HepG2 (cell line): ENCODE measurements at regions of chr7 and their contacts with region 1.

Region 1: DNA sequence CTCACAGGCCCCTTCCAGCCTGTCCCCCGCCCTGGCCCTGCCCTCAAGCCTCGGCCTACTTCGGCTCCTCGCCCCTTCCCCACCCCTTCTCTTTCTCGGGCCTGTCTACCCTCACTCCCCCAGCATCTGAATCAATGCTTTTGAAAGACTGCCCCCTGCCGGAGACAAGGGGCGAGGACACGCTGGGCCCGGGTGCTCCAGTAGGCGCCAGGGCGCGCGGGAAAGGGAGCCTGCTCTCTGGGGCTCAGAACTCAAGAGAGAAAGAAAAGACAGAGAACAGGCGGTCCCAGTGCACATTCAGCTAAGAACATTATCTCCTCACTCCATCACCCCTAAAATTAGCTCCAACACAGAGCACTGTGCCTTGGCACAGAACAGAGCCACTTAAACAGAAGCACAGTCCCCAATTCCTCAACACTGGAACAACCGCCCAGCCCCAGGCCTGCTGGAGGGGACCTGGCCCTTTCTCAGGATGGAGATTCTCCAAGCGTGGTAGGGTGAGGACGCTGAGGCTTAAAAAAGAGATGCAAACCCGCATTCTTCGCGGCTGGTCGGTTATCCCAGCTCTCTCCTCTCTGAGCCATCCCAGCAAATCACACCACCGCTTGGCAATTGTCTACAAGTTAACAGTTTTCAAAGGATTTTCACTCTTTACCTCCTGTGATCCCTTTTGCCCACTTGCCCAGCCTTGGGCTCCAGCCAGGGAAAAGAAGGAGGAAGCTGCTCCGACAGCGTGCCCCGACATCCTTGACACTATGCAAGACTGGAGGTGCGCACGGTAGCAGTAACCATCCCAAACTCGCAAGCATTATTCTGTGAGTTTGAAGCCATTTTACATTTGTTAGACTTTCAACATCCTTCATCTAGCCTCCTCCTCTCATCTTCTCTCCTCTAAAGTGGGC is 2.1 kb downstream of the GIGYF1 start:
- DNase-seq: peak; percentile 72
- ATAC-seq: peak; percentile 88
- H3K4me3 ChIP-seq: peak overlapping the region; percentile 93 to 97 (median 96); a peak in 5 of 6 replicates
- H3K27ac ChIP-seq: peak overlapping the region; percentile 34
- H3K4me1 ChIP-seq: peaks cover 34% of the 10 kb centered on the region
- H3K27me3 ChIP-seq: no peaks in the 10 kb centered on the region
- CTCF ChIP-seq: peak; percentile 95
- EP300 ChIP-seq: no peak
- POLR2A ChIP-seq: no peak
- RAD21 ChIP-seq: peak; percentile 73

Region 2: DNA sequence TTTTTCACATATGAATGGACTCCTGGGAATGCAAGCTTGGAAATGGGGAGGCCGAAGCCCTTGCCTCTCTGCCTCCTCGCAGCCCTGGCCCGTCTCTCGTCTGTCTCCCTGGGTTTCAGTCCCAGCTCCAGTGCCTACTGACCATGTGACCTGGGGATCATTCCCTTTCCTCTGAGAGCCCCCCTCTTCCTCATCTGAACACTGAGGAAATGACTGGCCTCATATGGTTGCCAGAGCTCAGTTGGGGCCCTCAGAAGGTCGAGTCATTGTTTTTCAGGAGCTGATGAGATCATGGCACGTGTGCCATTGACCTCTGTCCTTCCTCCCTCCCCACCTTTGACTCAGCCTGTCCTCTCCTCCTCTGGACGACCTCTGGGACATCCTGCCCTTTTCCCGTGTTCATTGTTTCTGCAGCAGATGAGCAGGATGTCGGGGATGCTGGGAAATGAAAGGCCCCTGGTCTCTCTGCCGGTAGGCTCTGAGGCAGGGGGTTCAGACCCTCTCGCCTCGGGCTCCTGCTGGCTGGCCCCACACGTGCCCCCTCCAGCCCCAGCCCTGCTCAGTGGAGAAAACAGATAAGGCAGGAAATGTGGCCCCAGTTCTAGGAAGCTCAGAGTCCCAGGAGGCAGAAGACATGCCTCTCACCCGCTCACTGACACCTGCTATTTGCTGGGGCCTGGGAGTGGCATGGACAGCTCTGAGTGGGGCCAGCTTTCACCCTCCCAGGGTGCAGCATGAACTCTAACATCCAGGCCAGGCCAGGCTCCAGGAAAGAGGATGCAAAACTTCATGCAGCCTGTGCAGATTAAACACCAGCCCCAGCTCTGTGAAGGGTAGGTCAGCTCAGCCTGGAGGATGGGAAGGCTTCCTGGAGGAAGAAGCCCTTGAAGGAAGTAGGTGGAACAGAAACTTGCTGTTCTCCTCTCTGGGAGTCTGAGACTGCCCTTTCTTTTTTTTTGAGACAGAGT is 247.3 kb before region 1 on chr7:
- CTCF ChIA-PET with region 1: no interaction called
- POLR2A ChIA-PET with region 1: no interaction called
- in situ Hi-C with region 1: no loop called
- intact Hi-C with region 1: no loop called
- DNase-seq: peak; percentile 96
- ATAC-seq: peak; percentile 85
- H3K4me3 ChIP-seq: peak overlapping the region in 2 of 3 experiments; percentile 27 to 51; a peak in 4 of 6 replicates
- H3K27ac ChIP-seq: peak overlapping the region; percentile 94
- H3K4me1 ChIP-seq: peaks cover 53% of the 10 kb centered on the region
- H3K27me3 ChIP-seq: no peaks in the 10 kb centered on the region
- CTCF ChIP-seq: no peak
- EP300 ChIP-seq: peak in 1 of 2 experiments; percentile 82; a peak in 3 of 4 replicates
- POLR2A ChIP-seq: peak; percentile 53 to 63; a peak in 2 of 4 replicates
- RAD21 ChIP-seq: no peak

Region 3: DNA sequence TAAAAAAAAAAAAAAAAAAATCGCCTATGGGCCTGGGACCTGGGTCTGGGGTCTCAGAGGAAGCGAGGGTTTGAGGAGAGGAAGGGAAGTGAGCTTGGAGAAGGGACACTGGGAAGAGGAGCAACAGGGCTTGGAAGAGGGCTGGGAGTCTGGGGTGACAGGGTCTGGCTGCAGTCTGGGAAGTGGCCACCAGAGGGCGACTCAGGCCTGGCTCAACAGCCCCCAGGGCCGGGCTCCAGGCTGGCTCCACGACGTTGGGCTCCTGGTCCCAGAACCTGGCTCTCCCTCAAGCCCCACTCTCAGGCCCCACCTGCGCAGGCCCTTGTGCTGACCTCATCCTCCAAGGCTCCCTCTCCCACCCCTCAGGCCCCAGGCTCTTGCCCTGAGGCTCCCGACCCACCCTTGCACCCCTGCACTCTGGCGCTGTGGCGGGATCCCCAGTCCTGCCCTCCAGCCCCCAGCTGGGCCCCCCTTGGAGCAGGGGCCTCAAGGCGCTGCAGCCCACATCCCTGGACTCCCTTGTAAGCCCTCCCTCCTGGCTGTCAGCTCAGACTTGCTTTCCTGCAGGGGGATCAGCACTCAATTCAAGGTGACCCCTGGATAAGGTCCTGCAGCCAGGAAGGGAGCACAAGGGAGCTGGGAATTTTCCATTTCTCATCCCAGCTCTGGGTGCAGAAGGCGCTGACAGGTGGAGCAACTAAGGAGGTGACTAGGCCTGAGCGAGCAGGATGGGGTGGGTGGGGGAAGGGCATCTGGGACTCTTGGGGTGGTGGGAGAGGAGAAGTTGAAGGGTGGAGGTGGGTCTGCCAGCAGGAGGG is 222.5 kb before region 1 on chr7:
- CTCF ChIA-PET with region 1: no interaction called
- POLR2A ChIA-PET with region 1: no interaction called
- in situ Hi-C with region 1: loop called (anchors 10 kb)
- intact Hi-C with region 1: no loop called
- DNase-seq: peak; percentile 51
- ATAC-seq: peak; percentile 87
- H3K4me3 ChIP-seq: 0 out of 6 replicates have a peak overlapping the region, but pooled peaks of 1 of the 3 experiments have one; percentile 28
- H3K27ac ChIP-seq: no peak overlapping the region
- H3K4me1 ChIP-seq: peaks cover 17% of the 10 kb centered on the region
- H3K27me3 ChIP-seq: no peaks in the 10 kb centered on the region
- CTCF ChIP-seq: peak; percentile 95
- EP300 ChIP-seq: no peak
- POLR2A ChIP-seq: no peak
- RAD21 ChIP-seq: peak; percentile 97

Region 4: GRCh38 chr7:100611974-100612729 is 79.8 kb before region 1 on chr7 and contains the start of gene MOSPD3:
- CTCF ChIA-PET with region 1: no interaction called
- POLR2A ChIA-PET with region 1: interaction called, 6 read pairs
- in situ Hi-C with region 1: loop called (anchors 5 kb)
- intact Hi-C with region 1: loop called (anchors 5 kb)
- DNase-seq: peak; percentile 99
- ATAC-seq: peak; percentile 94
- H3K4me3 ChIP-seq: peak within 1 kb of the TSS; percentile 61 to 81 (median 77)
- H3K27ac ChIP-seq: peak within 1 kb of the TSS; percentile 95
- H3K4me1 ChIP-seq: peaks cover 29% of the 10 kb centered on the region
- H3K27me3 ChIP-seq: no peaks in the 10 kb centered on the region
- CTCF ChIP-seq: no peak
- EP300 ChIP-seq: no peak
- POLR2A ChIP-seq: peak; percentile 60 to 78
- RAD21 ChIP-seq: no peak
- total RNA-seq, gene MOSPD3: 6.1 and 7.6 TPM in 2 replicates

Region 5: GRCh38 chr7:100629117-100629756 is 62.7 kb before region 1 on chr7:
- CTCF ChIA-PET with region 1: interaction called, 8 read pairs
- POLR2A ChIA-PET with region 1: interaction called, 5 read pairs
- in situ Hi-C with region 1: no loop called
- intact Hi-C with region 1: loop called (anchors 1 kb)
- DNase-seq: no peak
- ATAC-seq: peak; percentile 77
- H3K4me3 ChIP-seq: no peak overlapping the region
- H3K27ac ChIP-seq: no peak overlapping the region
- H3K4me1 ChIP-seq: no peaks in the 10 kb centered on the region
- H3K27me3 ChIP-seq: no peaks in the 10 kb centered on the region
- CTCF ChIP-seq: peak; percentile 66
- EP300 ChIP-seq: no peak
- POLR2A ChIP-seq: no peak
- RAD21 ChIP-seq: peak; percentile 61; the same call in 1 of the 2 replicates

Region 6: DNA sequence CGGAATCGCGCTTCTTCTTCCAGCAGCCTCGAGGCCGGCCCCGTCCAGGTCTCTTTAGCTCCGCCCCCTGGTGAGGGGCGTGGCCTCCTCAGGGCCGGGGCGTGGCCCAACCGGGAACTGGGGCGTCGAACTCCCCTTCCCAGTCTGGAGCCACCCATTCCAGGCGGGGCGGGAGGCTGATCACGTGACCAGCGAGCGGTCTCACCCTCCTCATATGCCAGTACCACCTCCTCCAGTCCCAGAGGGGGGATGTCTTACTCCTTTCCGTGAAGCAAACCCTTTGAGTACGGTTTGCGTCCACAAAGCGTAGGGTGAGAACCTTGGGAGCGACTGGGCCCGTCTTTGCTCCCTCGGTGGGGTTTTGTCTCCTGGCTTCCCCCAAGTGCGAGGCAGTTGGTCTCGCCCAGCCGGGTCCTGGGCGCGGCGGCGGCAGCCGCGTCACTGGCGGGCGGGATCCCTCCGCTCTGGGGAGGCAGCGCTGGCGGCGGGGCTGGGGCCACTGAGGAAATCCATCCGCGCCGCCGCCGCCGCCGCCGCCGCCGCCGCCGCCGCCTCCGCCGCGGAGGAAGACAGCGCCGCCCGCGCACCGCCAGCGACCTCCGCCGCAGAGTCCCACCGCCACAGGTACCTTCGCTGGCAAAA is 18.5 kb before region 1 on chr7 and contains the start of gene GNB2:
- CTCF ChIA-PET with region 1: no interaction called
- POLR2A ChIA-PET with region 1: interaction called, 3 read pairs
- in situ Hi-C with region 1: no loop called
- intact Hi-C with region 1: loop called (anchors 2 kb)
- DNase-seq: peak; percentile 96
- ATAC-seq: peak; percentile 65
- H3K4me3 ChIP-seq: peak within 1 kb of the TSS; percentile 92 to 97 (median 96)
- H3K27ac ChIP-seq: peak within 1 kb of the TSS; percentile 96
- H3K4me1 ChIP-seq: peaks cover 20% of the 10 kb centered on the region
- H3K27me3 ChIP-seq: peaks cover 0 to 4% of the 10 kb centered on the region in 2 experiments; a peak in 2 of 5 replicates
- CTCF ChIP-seq: no peak
- EP300 ChIP-seq: no peak
- POLR2A ChIP-seq: peak in 1 of 2 experiments; percentile 58; a peak in 1 of 4 replicates
- RAD21 ChIP-seq: peak; percentile 73
- total RNA-seq, gene GNB2: 48.3 and 64.3 TPM in 2 replicates